Dorsolateral prefrontal cortex (tissue), 120 donors: ENCODE measurements at regions of chr18 and their contacts with region 1.

Region 1: GRCh38 chr18:58407649-58408407 is 221.1 kb downstream of the ALPK2 start:
- DNase-seq: no peak
- H3K4me3 ChIP-seq: no peak overlapping the region
- H3K27ac ChIP-seq: no peak overlapping the region
- H3K27me3 ChIP-seq: no peaks in the 10 kb centered on the region
- CTCF ChIP-seq: no peak

Region 2: DNA sequence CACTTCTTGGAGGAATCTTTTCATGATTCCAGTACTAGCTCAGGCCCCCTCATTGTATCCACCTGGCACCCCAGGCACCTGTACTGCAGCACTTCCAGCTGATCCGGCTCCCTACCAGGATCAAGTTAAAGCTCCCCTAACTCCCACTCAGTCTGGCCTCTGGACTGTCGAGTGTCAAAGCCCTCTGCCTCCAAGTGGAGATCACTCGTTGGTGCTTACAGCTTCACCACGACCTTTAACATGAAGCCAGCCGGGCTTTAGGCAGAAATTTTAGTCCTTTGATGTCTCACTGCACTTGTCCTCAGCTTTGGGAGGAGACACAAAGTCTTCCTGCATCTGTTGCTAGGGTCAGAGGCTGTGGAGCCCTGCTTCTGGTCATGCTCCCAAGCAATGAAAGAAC is 23.4 kb after region 1 on chr18:
- intact Hi-C with region 1: loop called in 1 of 2 experiments (anchors 2 kb)
- DNase-seq: no peak
- H3K4me3 ChIP-seq: no peak overlapping the region
- H3K27ac ChIP-seq: no peak overlapping the region
- H3K27me3 ChIP-seq: no peaks in the 10 kb centered on the region
- CTCF ChIP-seq: no peak